Motor neuron (in vitro differentiated cells): ENCODE measurements at regions of chr21 and their contacts with region 1.

Region 1: DNA sequence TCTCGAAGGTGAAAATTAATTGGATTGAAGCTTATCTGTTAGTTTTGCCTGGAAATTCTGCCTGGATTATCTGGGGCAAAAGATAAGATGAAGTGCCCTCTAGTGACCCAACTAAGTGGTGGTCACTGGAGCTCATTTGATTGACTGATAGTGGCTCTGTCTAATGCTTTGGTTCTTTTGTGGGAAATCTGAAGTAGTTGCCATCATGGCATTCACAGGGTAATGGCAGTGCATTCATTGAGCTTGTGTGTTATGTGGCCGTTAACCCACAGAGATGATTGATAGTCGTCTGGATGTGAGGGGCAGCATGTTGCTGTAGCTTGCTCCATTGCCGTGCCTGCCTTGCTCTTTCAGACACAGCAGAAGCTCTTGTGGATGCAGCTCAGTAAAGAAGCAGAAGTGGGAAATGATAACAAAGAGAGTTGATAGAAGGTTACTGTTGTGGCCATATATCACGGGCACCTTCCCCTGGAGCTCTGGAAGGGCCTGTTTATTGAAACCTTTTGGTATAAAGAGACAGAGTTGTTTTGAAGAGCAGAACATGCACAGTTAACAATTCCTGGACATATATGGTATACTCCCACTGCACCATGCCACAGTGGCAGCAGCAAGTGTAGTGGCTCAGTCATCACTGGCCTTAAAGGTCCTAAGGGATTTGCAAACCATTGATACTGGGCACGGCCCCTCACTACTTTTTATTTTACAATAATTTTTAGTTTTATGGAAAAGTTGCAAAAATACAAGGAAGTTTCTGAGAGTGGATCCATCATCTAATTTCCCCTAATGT is 42.0 kb downstream of the CXADR start:
- ATAC-seq: peak; percentile 51 to 91 (median 82)
- H3K4me3 ChIP-seq: no peak overlapping the region
- H3K27ac ChIP-seq: peak overlapping the region in 1 of 2 donors; percentile 44
- H3K4me1 ChIP-seq: peaks cover 8 to 17% of the 10 kb centered on the region in 2 donors

Region 2: DNA sequence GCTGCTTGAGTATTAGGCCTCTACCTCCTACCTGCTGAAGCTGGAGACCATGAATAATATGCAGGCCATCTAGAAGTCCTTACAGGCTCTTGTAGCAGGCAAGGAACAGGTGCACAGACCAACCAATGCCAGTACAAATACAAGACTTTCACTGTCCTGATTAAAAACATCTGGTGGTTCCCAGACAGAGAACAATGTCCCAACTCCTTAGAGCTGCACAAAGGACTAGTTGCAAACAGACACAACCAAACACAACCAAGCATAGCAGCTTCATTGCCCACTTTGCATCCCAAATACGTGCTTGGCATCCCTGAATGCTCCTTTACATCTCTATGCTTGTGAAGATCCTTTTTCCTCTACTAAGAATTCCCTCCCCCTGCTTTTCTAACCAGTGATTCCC is 140.1 kb before region 1 on chr21:
- in situ Hi-C with region 1: no loop called
- ATAC-seq: peak in 2 of 8 experiments; percentile 19 to 39
- H3K4me3 ChIP-seq: no peak overlapping the region
- H3K27ac ChIP-seq: no peak overlapping the region
- H3K4me1 ChIP-seq: no peaks in the 10 kb centered on the region

Region 3: DNA sequence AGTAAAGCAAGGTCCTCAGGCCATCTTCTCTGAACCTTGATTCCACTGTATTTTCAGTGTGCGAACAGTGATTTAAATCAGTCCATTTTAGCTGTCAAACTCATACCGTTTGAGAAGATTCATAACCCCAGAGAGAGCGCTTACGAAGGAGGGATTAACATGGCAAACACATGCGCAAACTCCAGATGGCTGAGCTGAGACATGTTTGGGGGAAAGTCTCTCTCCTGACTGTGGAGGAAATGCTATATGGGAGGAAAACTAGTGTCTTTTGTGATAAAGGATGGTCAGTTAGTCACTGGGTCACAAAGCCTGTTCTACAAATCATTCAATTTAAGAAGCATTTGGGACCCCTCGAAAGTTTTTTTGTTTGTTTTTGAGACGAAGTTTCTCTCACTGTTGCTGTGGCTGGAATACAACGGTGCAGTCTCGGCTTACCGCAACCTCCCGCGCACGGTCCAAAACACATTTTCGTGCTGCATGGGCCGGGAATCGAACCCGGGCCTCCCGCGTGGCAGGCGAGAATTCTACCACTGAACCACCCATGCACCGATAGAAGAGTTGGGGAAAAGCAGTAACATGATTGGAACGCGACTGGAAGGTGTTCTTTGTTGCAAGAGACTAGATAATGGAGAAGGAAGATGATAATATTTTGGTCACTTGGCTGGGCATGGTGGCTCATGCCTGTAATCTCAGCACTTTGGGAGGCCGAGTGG is 100.4 kb before region 1 on chr21:
- in situ Hi-C with region 1: loop called in 1 of 9 experiments (anchors 25 kb)
- ATAC-seq: peak; percentile 79 to 96 (median 92)
- H3K4me3 ChIP-seq: peak overlapping the region in 4 of 5 donors; percentile 17 to 28 (median 22)
- H3K27ac ChIP-seq: no peak overlapping the region
- H3K4me1 ChIP-seq: peaks cover 0 to 4% of the 10 kb centered on the region in 2 donors

Region 4: GRCh38 chr21:17853393-17854275 is 298.8 kb after region 1 on chr21:
- in situ Hi-C with region 1: no loop called
- ATAC-seq: no peak
- H3K4me3 ChIP-seq: no peak overlapping the region
- H3K27ac ChIP-seq: no peak overlapping the region
- H3K4me1 ChIP-seq: peaks cover under 1 to 3% of the 10 kb centered on the region in 2 donors